ENCODE measurements at regions of chr5 and their contacts with region 1.

Region 1: DNA sequence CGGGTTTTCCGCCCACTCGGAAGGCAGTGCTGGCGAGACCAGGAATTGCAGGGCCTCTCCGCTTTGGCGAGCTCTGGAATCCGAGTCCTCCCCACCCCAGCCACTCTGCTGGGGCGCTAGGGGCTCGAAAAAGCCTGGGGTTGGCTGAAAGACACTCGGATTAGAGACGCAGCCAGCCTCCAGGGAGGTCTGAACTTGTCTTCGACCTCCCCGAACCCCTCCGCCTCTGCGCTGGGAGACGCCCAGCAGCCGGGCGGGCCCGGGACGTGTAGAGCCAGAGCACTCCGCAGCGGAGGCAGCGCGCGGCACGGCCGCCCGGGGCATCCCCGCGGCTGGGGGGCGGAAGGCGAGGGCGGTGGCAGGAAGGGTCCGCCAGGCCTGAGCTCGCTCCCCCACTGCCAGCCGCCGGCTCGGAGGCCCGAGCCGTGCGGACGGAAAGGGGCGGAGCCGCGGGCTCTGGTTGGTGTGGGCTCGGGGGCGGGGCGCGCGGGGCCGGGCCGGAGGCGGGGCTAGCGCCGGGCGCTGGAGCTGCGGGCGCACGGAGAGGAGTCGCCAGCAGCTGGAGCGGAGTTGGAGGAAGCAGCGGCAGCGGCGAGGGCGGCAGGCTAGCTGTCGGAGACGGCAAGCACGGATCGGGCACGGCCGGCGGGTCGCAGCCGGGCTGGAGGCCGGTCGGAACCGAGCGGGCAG is at the start of gene PIK3R1:
- DNase-seq: peak; percentile 96
- H3K4me3 ChIP-seq: peak within 1 kb of the TSS; percentile 89
- H3K27ac ChIP-seq: peak within 1 kb of the TSS; percentile 95
- H3K4me1 ChIP-seq: peaks cover 28% of the 10 kb centered on the region
- CTCF ChIP-seq: peak; percentile 32; the same call in 1 of the 2 replicates
- total RNA-seq, gene PIK3R1: 14.9 and 15.8 TPM in 2 replicates

Region 2: GRCh38 chr5:67003935-67004729 is 1211.2 kb before region 1 on chr5:
- CTCF ChIA-PET with region 1: no interaction called
- POLR2A ChIA-PET with region 1: no interaction called
- intact Hi-C with region 1: loop called (anchors 10 kb)
- DNase-seq: peak; percentile 92
- H3K4me3 ChIP-seq: peak overlapping the region; percentile 72
- H3K27ac ChIP-seq: peak overlapping the region; percentile 41
- H3K4me1 ChIP-seq: peaks cover 20% of the 10 kb centered on the region
- CTCF ChIP-seq: no peak

Region 3: GRCh38 chr5:67215583-67216471 is 999.5 kb before region 1 on chr5:
- CTCF ChIA-PET with region 1: no interaction called
- POLR2A ChIA-PET with region 1: interaction called, 3 read pairs
- intact Hi-C with region 1: loop called (anchors 5 kb)
- DNase-seq: peak; percentile 96
- H3K4me3 ChIP-seq: peak overlapping the region; percentile 36
- H3K27ac ChIP-seq: peak overlapping the region; percentile 75
- H3K4me1 ChIP-seq: peaks cover 23% of the 10 kb centered on the region
- CTCF ChIP-seq: no peak

Region 4: GRCh38 chr5:68252673-68253623 is 37.6 kb after region 1 on chr5:
- CTCF ChIA-PET with region 1: interaction called, 4 read pairs
- POLR2A ChIA-PET with region 1: interaction called, 17 read pairs
- intact Hi-C with region 1: no loop called
- DNase-seq: peak; percentile 66
- H3K4me3 ChIP-seq: no peak overlapping the region
- H3K27ac ChIP-seq: no peak overlapping the region
- H3K4me1 ChIP-seq: no peaks in the 10 kb centered on the region
- CTCF ChIP-seq: peak; percentile 84

Region 5: DNA sequence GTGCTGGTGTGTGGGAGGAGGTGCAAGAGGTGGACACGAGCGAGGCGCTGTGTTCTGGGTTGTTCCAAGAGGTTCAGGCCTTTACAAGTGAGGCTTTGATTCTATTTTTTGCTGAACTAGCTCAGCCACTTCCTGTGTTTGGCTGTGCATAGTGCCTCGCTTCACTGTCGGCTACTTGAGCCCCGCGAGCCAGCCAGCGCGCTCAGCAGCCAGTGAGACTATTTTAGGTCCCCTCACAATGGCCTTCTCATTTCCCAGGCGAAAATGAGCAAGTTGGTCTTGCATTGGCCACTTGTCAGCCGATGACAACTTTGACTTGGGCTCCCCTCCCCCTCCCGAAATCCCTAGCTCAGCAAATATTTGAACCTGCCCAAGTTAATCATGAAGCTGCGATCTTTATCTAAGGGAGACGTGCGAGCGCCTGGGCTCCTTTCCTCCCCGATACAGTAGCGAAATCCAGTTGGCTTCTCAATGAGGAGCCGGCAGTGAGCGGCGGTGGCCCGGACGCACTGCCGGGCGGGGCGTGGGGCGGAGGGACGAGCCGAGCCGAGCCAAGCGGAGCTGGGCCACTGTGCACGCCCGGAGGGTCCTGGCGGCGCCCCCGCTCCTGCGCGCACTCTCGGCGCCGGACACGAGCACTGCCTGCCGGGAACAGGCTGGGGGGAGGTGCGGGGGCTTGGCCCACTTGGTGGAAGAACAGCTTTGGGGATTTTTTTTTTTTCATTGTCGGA is 72.8 kb after region 1 on chr5:
- CTCF ChIA-PET with region 1: no interaction called
- POLR2A ChIA-PET with region 1: interaction called, 12 read pairs
- intact Hi-C with region 1: no loop called
- DNase-seq: peak; percentile 84
- H3K4me3 ChIP-seq: peak overlapping the region; percentile 51
- H3K27ac ChIP-seq: peak overlapping the region; percentile 43
- H3K4me1 ChIP-seq: peaks cover 39% of the 10 kb centered on the region
- CTCF ChIP-seq: 0 out of 2 replicates have a peak, but pooled peaks have one; percentile 4

Measured in OCI-LY7 (cell line).